WTC11 (cell line): ENCODE measurements at regions of chr5 and their contacts with region 1.

Region 1: GRCh38 chr5:132500931-132501630 is 10.5 kb upstream of the IRF1 start:
- DNase-seq: peak; percentile 68
- ATAC-seq: peak; percentile 20
- H3K4me3 Mint-ChIP-seq: no peak overlapping the region
- H3K27ac Mint-ChIP-seq: peak overlapping the region; percentile 72; the same call in 1 of the 2 replicates
- H3K4me1 Mint-ChIP-seq: peaks cover 10% of the 10 kb centered on the region
- H3K27me3 Mint-ChIP-seq: no peaks in the 10 kb centered on the region; the same call in 1 of the 2 replicates
- CTCF ChIP-seq: peak; percentile 86

Region 2: DNA sequence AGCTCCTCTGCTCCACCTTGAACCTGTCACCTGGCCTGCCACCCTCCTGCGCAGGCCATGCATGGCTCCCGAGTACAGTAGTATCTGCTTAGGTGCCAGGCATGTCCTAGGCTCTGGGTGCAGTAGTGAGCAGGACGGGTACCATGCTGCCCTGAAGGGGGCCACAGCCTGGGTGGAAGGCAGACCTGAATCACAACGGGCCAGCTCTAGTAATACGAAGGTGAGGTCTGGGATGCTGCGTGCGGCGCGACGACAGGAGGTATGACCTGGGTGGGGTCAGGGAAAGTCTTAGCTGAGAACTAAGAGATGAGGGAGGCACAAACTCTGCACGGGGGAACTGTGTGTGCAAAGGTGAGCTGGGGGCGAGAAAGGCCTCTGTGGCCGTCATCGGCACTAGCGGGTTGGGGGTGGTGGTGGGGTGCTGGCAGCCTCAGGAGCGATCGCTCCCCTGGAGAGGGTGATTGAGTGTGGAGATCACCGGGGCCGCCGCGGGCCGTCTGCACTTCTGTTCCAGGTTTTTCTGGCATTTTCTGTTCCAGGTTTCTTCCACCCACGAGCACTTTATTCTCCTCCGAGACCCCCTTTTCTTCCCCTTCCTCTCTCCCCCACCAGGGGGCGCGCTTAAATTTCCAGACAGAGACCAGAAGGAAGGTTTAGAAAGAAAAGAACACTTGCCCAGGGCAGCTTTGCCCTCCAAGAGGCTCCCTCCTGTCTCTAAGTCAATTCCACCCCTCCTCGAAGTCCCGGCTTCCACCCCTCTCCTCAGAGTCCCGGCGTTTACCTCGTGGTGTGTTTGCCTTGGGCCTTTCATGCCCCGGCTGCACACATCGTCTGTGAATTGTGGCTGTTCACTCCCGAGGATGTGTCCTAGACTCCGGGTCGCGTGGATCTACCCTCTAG is 228.5 kb before region 1 on chr5:
- CTCF ChIA-PET with region 1: interaction called, 10 read pairs
- POLR2A ChIA-PET with region 1: no interaction called
- DNase-seq: peak; percentile 89
- ATAC-seq: peak; percentile 65
- H3K4me3 Mint-ChIP-seq: no peak overlapping the region
- H3K27ac Mint-ChIP-seq: peak overlapping the region; percentile 16; the same call in 1 of the 2 replicates
- H3K4me1 Mint-ChIP-seq: peaks cover 16% of the 10 kb centered on the region
- H3K27me3 Mint-ChIP-seq: peaks cover 2% of the 10 kb centered on the region; the same call in 1 of the 2 replicates
- CTCF ChIP-seq: peak; percentile 85

Region 3: GRCh38 chr5:132410451-132411381 is 90.4 kb before region 1 on chr5:
- CTCF ChIA-PET with region 1: interaction called, 23 read pairs
- POLR2A ChIA-PET with region 1: interaction called, 3 read pairs
- DNase-seq: peak; percentile 88
- ATAC-seq: peak; percentile 98
- H3K4me3 Mint-ChIP-seq: peak overlapping the region; percentile 70
- H3K27ac Mint-ChIP-seq: peak overlapping the region; percentile 44
- H3K4me1 Mint-ChIP-seq: peaks cover 8% of the 10 kb centered on the region
- H3K27me3 Mint-ChIP-seq: peaks cover 5% of the 10 kb centered on the region
- CTCF ChIP-seq: peak; percentile 56

Region 4: DNA sequence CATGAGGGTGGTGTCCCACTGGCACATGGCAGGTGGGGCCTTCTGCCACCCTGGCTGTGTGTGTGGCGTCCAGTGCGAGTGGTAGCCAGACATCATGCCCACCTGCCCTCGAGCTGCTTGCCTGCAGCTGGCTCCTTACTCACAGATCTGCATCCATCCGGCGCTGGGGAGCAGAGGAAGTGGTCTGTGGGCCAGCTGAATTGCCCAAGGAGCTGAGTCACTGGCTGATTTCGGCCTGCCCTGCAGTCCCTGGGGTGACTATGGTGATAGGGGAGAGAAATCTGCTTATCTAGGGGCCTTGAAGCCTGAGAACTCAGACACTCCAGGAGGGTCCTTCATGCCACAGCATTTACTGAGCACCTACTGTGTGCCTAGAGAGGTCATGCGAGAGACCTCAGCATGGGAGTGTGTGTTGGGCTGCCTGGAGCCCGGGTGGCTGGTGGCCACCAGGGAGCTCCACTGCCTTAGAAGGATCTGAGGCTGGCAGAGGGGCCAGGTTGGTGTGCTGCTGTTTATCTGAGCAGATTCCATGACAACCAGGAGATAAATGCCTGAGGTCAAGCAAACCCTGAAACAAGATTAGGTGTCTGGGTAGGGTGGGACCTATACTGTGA is 74.4 kb before region 1 on chr5:
- CTCF ChIA-PET with region 1: interaction called, 52 read pairs
- POLR2A ChIA-PET with region 1: interaction called, 8 read pairs
- DNase-seq: peak; percentile 41
- ATAC-seq: peak; percentile 85
- H3K4me3 Mint-ChIP-seq: no peak overlapping the region
- H3K27ac Mint-ChIP-seq: no peak overlapping the region
- H3K4me1 Mint-ChIP-seq: peaks cover 18% of the 10 kb centered on the region
- H3K27me3 Mint-ChIP-seq: no peaks in the 10 kb centered on the region
- CTCF ChIP-seq: no peak

Region 5: GRCh38 chr5:132490486-132491367 is 10.4 kb before region 1 on chr5 and contains the start of gene IRF1:
- CTCF ChIA-PET with region 1: interaction called, 23 read pairs
- POLR2A ChIA-PET with region 1: interaction called, 4 read pairs
- DNase-seq: peak; percentile 93
- ATAC-seq: peak; percentile 89
- H3K4me3 Mint-ChIP-seq: peak within 1 kb of the TSS; percentile 83
- H3K27ac Mint-ChIP-seq: no peak within 1 kb of the TSS
- H3K4me1 Mint-ChIP-seq: peaks cover 27% of the 10 kb centered on the region
- H3K27me3 Mint-ChIP-seq: peaks cover 33% of the 10 kb centered on the region
- CTCF ChIP-seq: no peak
- total RNA-seq, gene IRF1: 8.8 to 9.8 TPM (median 9.4 TPM) in 3 replicates